Activated T-helper 2 cell treated with anti-CD3 and anti-CD28 coated beads, Interferon-gamma antibody, Interleukin-2, Interleukin-4, amounts not matched to agents 10 μg/mL and 5 μg/mL and 100 μg/mL, durations not matched to agents 14 hours and 24 hours and 36 hours (primary cell): ENCODE measurements at regions of chr12 and their contacts with region 1.

Region 1: GRCh38 chr12:116358893-116359761 is 81.6 kb upstream of the MED13L start:
- DNase-seq: peak; percentile 55
- H3K4me3 Mint-ChIP-seq: peak overlapping the region; percentile 57
- H3K27ac Mint-ChIP-seq: peak overlapping the region; percentile 72
- H3K4me1 Mint-ChIP-seq: peaks cover 24% of the 10 kb centered on the region
- H3K27me3 Mint-ChIP-seq: no peaks in the 10 kb centered on the region

Region 2: DNA sequence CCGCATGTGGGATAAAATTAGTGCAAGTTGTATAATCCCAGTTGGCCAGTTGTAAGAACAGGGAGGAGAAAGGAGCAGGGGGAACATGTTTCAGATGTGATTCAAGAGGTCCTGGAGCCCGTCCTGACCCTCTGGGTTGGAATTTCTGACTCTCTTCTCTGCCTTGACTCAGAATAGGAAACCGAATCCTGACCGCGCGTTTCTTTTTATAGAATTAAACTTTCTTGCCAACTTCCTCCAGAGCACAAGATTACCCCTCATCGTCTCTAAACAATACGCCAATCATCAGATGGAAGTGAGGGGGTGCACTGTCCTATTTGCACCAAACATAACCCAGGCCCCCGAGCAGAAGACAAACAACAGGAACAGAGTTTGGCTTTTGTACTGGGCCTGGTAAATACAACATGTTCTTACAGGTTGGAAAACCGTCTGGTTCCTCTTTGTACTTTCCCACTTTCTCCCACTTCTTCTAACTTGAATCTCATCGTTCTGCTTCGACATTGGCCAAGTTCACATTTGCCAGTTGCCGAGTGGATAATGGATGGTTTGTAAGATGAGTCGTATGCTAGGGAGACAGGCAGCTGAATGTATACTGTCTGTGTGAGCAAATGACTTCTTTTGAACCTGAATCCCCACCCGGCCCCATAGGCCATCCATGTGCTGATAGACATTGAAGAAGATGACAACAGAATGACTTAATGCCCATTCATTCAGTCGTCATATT is 39.1 kb before region 1 on chr12:
- intact Hi-C with region 1: loop called (anchors 5 kb)
- DNase-seq: peak; percentile 13
- H3K4me3 Mint-ChIP-seq: peak overlapping the region; percentile 37
- H3K27ac Mint-ChIP-seq: peak overlapping the region; percentile 84
- H3K4me1 Mint-ChIP-seq: peaks cover 46% of the 10 kb centered on the region
- H3K27me3 Mint-ChIP-seq: peaks cover 1% of the 10 kb centered on the region

Region 3: GRCh38 chr12:116332705-116333380 is 26.3 kb before region 1 on chr12:
- intact Hi-C with region 1: no loop called
- DNase-seq: no peak
- H3K4me3 Mint-ChIP-seq: no peak overlapping the region
- H3K27ac Mint-ChIP-seq: no peak overlapping the region
- H3K4me1 Mint-ChIP-seq: no peaks in the 10 kb centered on the region
- H3K27me3 Mint-ChIP-seq: peaks cover 2% of the 10 kb centered on the region

Region 4: GRCh38 chr12:116891952-116892744 is 533.0 kb after region 1 on chr12:
- intact Hi-C with region 1: no loop called
- DNase-seq: no peak
- H3K4me3 Mint-ChIP-seq: no peak overlapping the region
- H3K27ac Mint-ChIP-seq: no peak overlapping the region
- H3K4me1 Mint-ChIP-seq: no peaks in the 10 kb centered on the region
- H3K27me3 Mint-ChIP-seq: peaks cover 16% of the 10 kb centered on the region